Activated T-helper 1 cell treated with anti-CD3 and anti-CD28 coated beads, Interleukin-12 subunit alpha, Interleukin-12 subunit beta, Interleukin-2, Interleukin-4 antibody, amounts not matched to agents 30 ng/mL and 10 ng/mL and 1 ng/mL, durations not matched to agents 14 hours and 24 hours and 36 hours (primary cell): ENCODE measurements at regions of chr15 and their contacts with region 1.

Region 1: GRCh38 chr15:99755692-99756409 is 22.6 kb upstream of the LYSMD4 start:
- DNase-seq: peak; percentile 31
- H3K4me3 Mint-ChIP-seq: no peak overlapping the region
- H3K27ac Mint-ChIP-seq: no peak overlapping the region
- H3K4me1 Mint-ChIP-seq: peaks cover 8% of the 10 kb centered on the region
- H3K27me3 Mint-ChIP-seq: peaks cover 14% of the 10 kb centered on the region

Region 2: GRCh38 chr15:99104788-99105513 is 650.9 kb before region 1 on chr15 and contains the start of gene SYNM:
- intact Hi-C with region 1: loop called (anchors 10 kb)
- DNase-seq: peak; percentile 39
- H3K4me3 Mint-ChIP-seq: peak within 1 kb of the TSS; percentile 69
- H3K27ac Mint-ChIP-seq: no peak within 1 kb of the TSS
- H3K4me1 Mint-ChIP-seq: peaks cover 12% of the 10 kb centered on the region
- H3K27me3 Mint-ChIP-seq: peaks cover 36% of the 10 kb centered on the region
- total RNA-seq, gene SYNM: 2.0 and 2.2 TPM in 2 replicates

Region 3: DNA sequence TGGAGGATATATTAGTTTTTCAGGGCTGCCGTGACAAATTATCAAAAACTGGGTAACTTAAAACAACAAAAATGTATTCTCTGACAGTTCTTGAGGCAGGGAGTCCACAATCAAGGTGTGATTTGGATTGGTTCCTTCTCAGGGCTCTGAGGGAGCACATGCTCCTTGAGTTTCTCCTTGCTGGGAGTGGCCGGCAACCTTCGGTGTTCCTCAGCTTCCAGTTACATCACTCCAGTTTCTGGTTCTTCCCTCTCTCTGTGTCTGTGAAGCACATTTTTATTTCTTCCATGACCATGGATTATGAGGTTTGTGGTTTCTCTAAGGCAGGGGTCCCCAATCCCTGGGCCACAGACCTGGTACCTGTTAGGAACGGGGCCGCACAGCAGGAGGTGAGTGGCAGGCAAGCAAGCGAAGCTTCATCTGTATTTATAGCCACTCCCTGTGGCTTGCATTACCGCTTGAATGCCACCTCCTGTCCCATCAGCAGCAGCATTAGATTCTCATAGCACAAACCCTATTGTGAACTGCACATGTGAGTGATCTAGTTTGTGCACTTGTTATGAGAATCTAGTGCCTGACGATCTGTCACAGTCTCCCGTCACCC is 480.2 kb before region 1 on chr15:
- intact Hi-C with region 1: loop called (anchors 1 kb)
- DNase-seq: no peak
- H3K4me3 Mint-ChIP-seq: no peak overlapping the region
- H3K27ac Mint-ChIP-seq: no peak overlapping the region
- H3K4me1 Mint-ChIP-seq: peaks cover 34% of the 10 kb centered on the region
- H3K27me3 Mint-ChIP-seq: no peaks in the 10 kb centered on the region

Region 4: DNA sequence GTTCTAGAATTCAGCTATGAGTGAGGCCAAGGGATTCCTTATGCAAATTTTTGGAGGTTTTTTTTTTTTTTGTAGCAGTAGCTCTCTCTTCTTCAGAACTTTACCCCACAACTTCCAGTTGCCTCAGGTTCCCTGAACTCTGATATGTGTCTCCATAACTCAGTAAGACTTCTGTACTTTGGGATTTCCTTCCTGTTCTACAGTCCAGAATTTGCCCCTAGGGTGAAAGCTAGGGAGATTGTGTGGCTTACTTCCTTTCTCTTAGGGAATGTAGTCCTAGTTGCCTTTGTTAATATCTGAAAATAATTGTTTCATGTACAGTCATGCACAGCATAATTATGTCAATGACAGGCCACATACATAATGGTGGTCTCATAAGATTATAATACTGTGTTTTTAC is 473.7 kb before region 1 on chr15:
- intact Hi-C with region 1: loop called (anchors 1 kb)
- DNase-seq: no peak
- H3K4me3 Mint-ChIP-seq: no peak overlapping the region
- H3K27ac Mint-ChIP-seq: peak overlapping the region; percentile 63
- H3K4me1 Mint-ChIP-seq: peaks cover 68% of the 10 kb centered on the region
- H3K27me3 Mint-ChIP-seq: no peaks in the 10 kb centered on the region

Region 5: DNA sequence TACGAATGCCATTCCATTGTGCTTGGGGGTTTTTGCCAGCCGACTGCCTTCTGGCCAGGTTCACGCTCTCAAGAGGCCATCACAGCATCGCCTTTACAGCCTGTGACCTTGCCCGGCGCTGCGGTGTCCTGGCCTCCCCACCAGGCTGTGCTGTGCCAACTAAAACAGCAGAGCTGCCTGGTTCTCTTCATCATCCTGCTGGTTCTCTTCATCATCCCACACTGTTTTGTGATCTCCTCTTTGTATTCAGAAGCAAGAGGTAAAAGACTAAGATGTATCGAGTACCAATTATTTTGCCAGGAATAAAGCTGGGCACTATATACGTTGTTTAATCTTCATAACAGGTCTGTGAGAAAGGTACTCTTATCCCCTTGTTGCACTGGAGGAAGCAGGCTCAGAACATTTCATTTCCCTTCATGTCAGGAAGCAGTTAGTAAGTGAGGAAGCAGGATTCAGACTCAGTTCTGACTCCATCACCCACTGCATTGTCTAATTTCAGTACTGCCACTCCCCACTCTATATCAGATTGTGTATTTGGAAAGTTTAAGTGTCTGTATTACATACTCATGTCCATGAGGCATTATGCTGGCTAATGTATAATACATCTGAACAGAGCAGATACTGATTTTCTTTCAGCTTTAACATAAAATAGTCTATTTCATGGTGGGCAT is 411.8 kb before region 1 on chr15:
- intact Hi-C with region 1: loop called (anchors 5 kb)
- DNase-seq: peak; percentile 4
- H3K4me3 Mint-ChIP-seq: no peak overlapping the region
- H3K27ac Mint-ChIP-seq: no peak overlapping the region
- H3K4me1 Mint-ChIP-seq: peaks cover 12% of the 10 kb centered on the region
- H3K27me3 Mint-ChIP-seq: no peaks in the 10 kb centered on the region

Region 6: GRCh38 chr15:99473981-99474906 is 281.6 kb before region 1 on chr15:
- intact Hi-C with region 1: no loop called
- DNase-seq: no peak
- H3K4me3 Mint-ChIP-seq: no peak overlapping the region
- H3K27ac Mint-ChIP-seq: no peak overlapping the region
- H3K4me1 Mint-ChIP-seq: peaks cover 16% of the 10 kb centered on the region
- H3K27me3 Mint-ChIP-seq: peaks cover 7% of the 10 kb centered on the region